Calu3 (cell line): ENCODE measurements at regions of chrX and their contacts with region 1.

Region 1: DNA sequence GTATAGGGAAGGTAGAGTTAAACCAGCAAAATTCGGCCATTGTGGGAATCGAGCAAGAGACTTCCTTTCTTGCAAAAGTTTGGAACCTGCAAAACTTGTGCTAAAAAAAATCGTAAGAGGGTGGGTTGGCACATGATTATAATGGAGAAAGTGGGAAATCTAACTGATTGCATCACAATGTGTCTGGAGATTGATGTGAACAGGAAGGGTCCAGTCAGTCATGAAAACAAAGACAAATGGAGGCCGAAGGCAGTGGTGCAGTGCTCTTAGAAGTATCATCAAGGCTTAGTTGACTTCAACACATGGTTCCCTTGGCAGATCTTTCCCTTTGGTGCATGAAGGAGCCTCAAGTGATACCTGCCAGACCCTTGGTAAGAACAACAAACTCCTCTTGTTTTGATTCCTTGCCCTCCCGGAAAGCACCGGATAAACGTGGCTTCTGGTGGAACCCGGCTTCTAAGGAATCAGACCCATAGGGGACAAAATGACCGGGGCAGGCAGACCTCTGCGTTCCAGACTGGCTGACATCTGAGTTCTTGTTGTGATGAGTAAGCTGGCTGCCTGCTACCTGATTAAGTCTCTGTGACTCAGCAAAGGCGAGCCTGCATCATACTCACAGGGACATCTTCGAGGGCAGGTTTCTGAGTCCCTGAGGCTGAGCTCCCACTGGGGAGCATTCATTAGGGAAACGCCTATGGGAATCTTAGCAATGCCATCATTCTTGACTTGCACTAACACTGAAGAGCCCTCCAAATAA is 87.7 kb upstream of the MAP3K15 start:
- DNase-seq: peak; percentile 15
- H3K4me3 Mint-ChIP-seq: no peak overlapping the region
- H3K27ac Mint-ChIP-seq: no peak overlapping the region
- H3K4me1 Mint-ChIP-seq: peaks cover 10% of the 10 kb centered on the region
- H3K27me3 Mint-ChIP-seq: no peaks in the 10 kb centered on the region
- CTCF ChIP-seq: no peak

Region 2: GRCh38 chrX:19563746-19564145 is 39.3 kb before region 1 on chrX:
- CTCF ChIA-PET with region 1: interaction called, 14 read pairs
- intact Hi-C with region 1: no loop called
- DNase-seq: no peak
- H3K4me3 Mint-ChIP-seq: no peak overlapping the region
- H3K27ac Mint-ChIP-seq: no peak overlapping the region
- H3K4me1 Mint-ChIP-seq: no peaks in the 10 kb centered on the region
- H3K27me3 Mint-ChIP-seq: no peaks in the 10 kb centered on the region
- CTCF ChIP-seq: no peak